Activated CD8-positive, alpha-beta memory T cell treated with anti-CD3 and anti-CD28 coated beads, Interleukin-2, amount 10 ng/mL, durations not matched to agents 7 days and 5 days (primary cell): ENCODE measurements at regions of chr6 and their contacts with region 1.

Region 1: DNA sequence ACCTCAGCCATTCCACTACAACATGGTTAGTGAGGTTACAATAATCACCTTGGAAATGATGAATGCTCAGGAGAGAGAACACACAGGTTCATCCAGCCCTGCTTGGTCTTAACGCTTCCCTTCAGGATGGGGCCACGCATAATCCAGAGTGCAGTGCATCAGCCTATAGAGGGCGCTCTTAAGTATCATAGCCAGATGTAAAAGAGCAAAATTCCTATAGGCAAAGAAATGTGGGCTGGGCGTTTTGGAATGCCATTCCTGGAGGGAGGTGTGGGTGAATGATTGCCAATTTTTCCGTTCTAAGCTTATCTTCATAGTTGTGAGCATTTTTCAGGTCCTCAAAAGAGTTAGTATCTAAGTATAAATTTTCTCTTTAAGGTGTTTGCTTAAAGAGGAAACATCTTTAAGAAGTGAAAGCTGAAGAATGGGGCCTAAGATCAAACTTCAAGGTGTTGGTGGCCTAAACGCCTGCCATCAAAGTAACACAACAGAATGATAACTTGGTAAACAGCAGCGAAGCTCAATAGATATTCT is 1.8 kb downstream of the RIPOR2 start:
- DNase-seq: peak; percentile 66
- ATAC-seq: peak; percentile 12
- H3K4me3 Mint-ChIP-seq: peak overlapping the region; percentile 95
- H3K27ac Mint-ChIP-seq: peak overlapping the region; percentile 97
- H3K4me1 Mint-ChIP-seq: peaks cover 87% of the 10 kb centered on the region
- H3K27me3 Mint-ChIP-seq: no peaks in the 10 kb centered on the region

Region 2: GRCh38 chr6:24831771-24832716 is 101.9 kb before region 1 on chr6:
- CTCF ChIA-PET with region 1: no interaction called
- DNase-seq: no peak
- ATAC-seq: no peak
- H3K4me3 Mint-ChIP-seq: no peak overlapping the region
- H3K27ac Mint-ChIP-seq: no peak overlapping the region
- H3K4me1 Mint-ChIP-seq: peaks cover 20% of the 10 kb centered on the region
- H3K27me3 Mint-ChIP-seq: no peaks in the 10 kb centered on the region

Region 3: DNA sequence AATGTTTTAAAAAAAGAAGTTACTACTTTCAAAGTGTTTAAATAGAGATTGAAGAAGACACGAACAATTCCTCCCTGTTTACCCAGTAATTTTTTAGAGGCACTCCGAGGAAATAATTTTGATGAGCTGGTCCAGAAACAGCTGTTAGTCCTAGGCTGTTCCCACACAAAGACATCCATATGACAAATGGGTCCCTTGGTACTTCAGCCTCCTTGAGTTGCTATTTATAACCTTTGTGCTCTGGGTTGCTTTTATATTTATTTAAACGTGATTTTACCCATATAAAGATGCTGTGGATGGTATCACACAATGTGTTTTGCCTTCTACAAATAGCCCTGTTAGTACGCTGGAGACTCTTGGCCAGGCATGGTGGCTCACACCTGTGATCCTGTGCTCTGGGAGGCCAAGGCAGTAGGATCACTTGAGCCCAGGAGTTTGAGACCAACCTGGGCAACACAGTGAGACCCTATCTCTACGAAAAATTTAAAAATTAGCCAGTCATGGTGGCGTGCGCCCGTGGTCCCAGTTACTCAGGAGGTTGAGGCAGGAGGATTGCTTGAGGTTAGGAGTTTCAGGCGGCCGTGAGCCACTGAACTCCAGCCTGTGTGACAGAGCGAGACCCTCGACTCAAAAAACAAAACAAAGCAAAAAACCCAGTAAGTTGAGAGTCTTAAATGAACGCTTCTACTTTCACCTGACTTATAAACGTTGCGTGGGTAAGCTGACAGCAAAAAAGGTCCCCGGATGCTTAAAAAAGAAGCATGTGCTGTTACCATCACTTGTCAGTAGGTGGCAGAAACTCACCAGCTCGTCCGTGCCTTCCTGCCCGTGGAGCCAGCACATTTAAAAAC is 78.3 kb before region 1 on chr6:
- CTCF ChIA-PET with region 1: interaction called, 70 read pairs
- DNase-seq: peak; percentile 78
- ATAC-seq: peak; percentile 60
- H3K4me3 Mint-ChIP-seq: no peak overlapping the region
- H3K27ac Mint-ChIP-seq: peak overlapping the region; percentile 88
- H3K4me1 Mint-ChIP-seq: peaks cover 52% of the 10 kb centered on the region
- H3K27me3 Mint-ChIP-seq: no peaks in the 10 kb centered on the region

Region 4: GRCh38 chr6:24919004-24919892 is 14.7 kb before region 1 on chr6:
- CTCF ChIA-PET with region 1: interaction called, 72 read pairs
- DNase-seq: no peak
- ATAC-seq: peak; percentile 40
- H3K4me3 Mint-ChIP-seq: peak overlapping the region; percentile 1
- H3K27ac Mint-ChIP-seq: peak overlapping the region; percentile 47
- H3K4me1 Mint-ChIP-seq: peaks cover 67% of the 10 kb centered on the region
- H3K27me3 Mint-ChIP-seq: no peaks in the 10 kb centered on the region

Region 5: DNA sequence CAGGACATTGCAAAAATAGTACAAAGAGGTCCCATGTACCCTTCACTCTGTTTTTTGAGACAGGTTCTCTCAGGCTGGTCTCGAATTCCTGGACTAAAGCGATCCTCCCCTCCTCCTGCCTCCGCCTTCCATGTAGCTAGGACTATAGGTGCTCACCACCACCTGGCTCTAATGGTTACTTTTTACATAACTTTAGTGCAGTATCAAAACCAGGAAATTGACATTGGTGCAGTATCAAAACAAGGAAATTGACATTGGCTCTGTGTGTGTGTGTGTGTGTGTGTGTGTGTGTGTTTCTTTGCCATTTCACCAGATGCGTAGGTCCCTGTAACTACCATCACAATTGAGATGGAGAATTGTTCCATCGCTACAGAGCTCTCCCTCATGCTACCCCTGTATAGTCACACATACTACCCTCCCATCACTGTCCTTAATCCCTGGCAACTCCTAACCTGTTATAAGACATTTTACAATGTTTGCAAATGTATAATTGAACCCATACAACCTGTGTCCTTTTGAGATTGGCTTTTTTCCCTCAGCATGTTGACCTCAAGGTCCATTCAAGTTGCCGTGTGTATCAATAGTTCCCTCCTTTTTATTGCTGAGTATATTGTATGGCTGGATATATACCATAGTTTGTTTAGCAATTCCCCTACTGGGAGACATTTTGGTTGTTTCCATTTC is 30.1 kb after region 1 on chr6:
- CTCF ChIA-PET with region 1: interaction called, 13 read pairs
- DNase-seq: no peak
- ATAC-seq: no peak
- H3K4me3 Mint-ChIP-seq: no peak overlapping the region
- H3K27ac Mint-ChIP-seq: no peak overlapping the region
- H3K4me1 Mint-ChIP-seq: peaks cover 32% of the 10 kb centered on the region
- H3K27me3 Mint-ChIP-seq: no peaks in the 10 kb centered on the region

Region 6: GRCh38 chr6:25017932-25018567 is 84.1 kb after region 1 on chr6:
- CTCF ChIA-PET with region 1: interaction called, 38 read pairs
- DNase-seq: peak; percentile 87
- ATAC-seq: peak; percentile 89
- H3K4me3 Mint-ChIP-seq: no peak overlapping the region
- H3K27ac Mint-ChIP-seq: peak overlapping the region; percentile 39
- H3K4me1 Mint-ChIP-seq: peaks cover 33% of the 10 kb centered on the region
- H3K27me3 Mint-ChIP-seq: no peaks in the 10 kb centered on the region

Region 7: GRCh38 chr6:25070547-25071366 is 136.8 kb after region 1 on chr6:
- CTCF ChIA-PET with region 1: interaction called, 13 read pairs
- DNase-seq: peak; percentile 89
- ATAC-seq: peak; percentile 94
- H3K4me3 Mint-ChIP-seq: peak overlapping the region; percentile 57
- H3K27ac Mint-ChIP-seq: peak overlapping the region; percentile 86
- H3K4me1 Mint-ChIP-seq: peaks cover 5% of the 10 kb centered on the region
- H3K27me3 Mint-ChIP-seq: peaks cover 6% of the 10 kb centered on the region

Region 8: DNA sequence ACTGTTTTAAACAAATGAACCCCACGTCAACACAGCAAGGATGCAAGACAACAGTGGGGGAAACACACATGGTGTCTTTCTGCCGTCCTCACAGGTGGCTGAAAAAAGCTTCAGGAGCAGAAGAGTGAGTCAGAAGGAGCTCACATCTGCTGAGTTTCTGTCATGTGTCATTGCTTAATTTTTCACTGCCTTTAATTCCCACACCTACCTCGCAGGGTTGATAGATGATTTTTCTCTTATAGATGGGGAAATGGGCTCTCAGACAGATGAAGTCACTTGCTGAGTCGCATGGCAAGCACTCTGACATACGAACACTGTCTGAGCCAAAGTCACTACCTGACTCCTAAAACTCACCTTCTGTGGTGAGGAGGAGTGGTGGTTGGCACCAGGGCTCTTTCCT is 316.9 kb after region 1 on chr6:
- CTCF ChIA-PET with region 1: no interaction called
- DNase-seq: no peak
- ATAC-seq: no peak
- H3K4me3 Mint-ChIP-seq: no peak overlapping the region
- H3K27ac Mint-ChIP-seq: no peak overlapping the region
- H3K4me1 Mint-ChIP-seq: peaks cover 10% of the 10 kb centered on the region
- H3K27me3 Mint-ChIP-seq: peaks cover 15% of the 10 kb centered on the region